ENCODE measurements at regions of chr19 and their contacts with region 1.

Region 1: DNA sequence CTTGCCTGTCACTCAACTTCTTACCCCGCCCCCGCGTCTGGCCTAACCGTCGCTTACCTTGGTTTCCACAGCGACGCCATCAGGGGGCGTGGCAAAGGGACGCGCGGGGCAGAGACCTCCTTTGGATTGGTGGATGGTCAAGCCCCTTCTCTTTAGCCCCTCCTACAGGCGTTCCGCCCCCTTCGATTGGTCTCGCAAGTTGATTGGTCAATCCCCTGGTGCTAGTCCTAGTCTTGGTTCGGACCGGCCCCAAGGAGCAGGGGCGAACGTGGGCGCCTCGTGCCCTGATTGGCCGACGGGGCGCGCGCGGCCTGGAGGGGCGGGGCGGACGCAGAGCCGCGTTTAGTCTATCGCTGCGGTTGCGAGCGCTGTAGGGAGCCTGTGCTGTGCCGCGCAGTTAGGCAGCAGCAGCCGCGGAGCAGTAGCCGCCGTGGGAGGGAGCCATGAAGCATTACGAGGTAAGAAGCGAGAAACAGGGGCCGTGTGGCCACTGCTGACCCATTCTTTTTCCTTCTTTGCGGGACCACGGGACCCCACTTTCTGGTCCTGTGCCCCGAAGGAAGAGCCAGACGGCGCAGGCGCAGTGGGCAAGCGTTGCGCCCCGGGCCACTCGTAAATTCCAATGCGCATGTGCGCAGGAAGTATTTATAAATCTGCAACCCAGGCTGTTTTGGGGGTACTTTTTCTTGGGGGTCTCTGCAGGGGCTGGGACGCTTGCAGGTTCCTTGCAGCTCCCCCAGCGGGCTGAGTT is at the start of gene TECR:
- DNase-seq: peak; percentile 100
- H3K4me3 Mint-ChIP-seq: peak within 1 kb of the TSS; percentile 93
- H3K27ac Mint-ChIP-seq: peak within 1 kb of the TSS; percentile 52
- H3K4me1 Mint-ChIP-seq: peaks cover 27% of the 10 kb centered on the region
- H3K27me3 Mint-ChIP-seq: no peaks in the 10 kb centered on the region
- CTCF ChIP-seq: no peak
- total RNA-seq, gene TECR: 74.1 and 106 TPM in 2 replicates

Region 2: DNA sequence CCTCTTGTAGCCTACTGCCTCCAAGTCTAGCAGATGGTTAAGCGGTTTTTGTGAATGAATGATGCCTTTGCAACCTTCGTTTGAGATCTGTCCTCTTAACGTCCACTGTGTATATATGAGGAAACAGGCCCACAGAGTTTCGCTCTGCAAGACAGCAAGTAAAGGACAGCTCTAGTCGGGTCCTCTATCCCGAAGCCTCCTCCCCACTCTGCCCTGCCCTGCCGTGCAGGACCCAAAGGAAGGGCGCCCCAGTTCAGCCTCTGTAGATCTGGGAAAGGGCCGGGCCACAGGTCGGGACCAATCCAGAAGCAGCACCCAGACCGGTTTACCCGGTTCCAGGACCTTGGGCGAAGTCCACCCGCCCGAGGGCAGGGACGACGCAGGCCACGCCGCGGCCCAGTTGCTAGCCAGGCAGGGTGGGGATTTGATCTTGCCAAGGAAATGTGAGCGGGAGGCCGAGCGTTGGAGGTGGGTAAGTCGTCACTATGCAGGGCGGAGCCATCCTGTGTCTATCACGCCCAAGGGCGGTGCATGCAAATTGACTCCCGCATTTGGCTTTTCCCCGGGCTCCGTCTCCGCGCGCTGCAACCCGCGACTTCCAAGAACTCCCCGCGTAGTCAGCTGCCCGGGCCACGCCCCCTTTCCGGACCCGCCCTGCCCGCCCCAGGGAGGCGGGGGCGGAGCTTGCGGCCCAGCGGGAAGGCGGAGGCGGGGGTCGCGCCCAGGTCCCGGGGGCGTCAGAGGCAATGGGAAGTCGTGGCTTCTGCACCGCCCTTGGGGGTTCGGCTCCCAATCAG is 1366.7 kb before region 1 on chr19:
- CTCF ChIA-PET with region 1: no interaction called
- POLR2A ChIA-PET with region 1: interaction called, 3 read pairs
- intact Hi-C with region 1: loop called (anchors 5 kb)
- DNase-seq: peak; percentile 99
- H3K4me3 Mint-ChIP-seq: peak overlapping the region; percentile 62
- H3K27ac Mint-ChIP-seq: peak overlapping the region; percentile 85
- H3K4me1 Mint-ChIP-seq: peaks cover 22% of the 10 kb centered on the region
- H3K27me3 Mint-ChIP-seq: no peaks in the 10 kb centered on the region
- CTCF ChIP-seq: no peak

Region 3: GRCh38 chr19:14425696-14426138 is 103.7 kb before region 1 on chr19:
- CTCF ChIA-PET with region 1: no interaction called
- POLR2A ChIA-PET with region 1: no interaction called
- intact Hi-C with region 1: no loop called
- DNase-seq: no peak
- H3K4me3 Mint-ChIP-seq: no peak overlapping the region
- H3K27ac Mint-ChIP-seq: no peak overlapping the region
- H3K4me1 Mint-ChIP-seq: peaks cover 5% of the 10 kb centered on the region
- H3K27me3 Mint-ChIP-seq: no peaks in the 10 kb centered on the region
- CTCF ChIP-seq: no peak

Region 4: GRCh38 chr19:14496028-14496833 is 33.2 kb before region 1 on chr19 and contains the start of gene GIPC1:
- CTCF ChIA-PET with region 1: no interaction called
- POLR2A ChIA-PET with region 1: interaction called, 52 read pairs
- intact Hi-C with region 1: no loop called
- DNase-seq: peak; percentile 99
- H3K4me3 Mint-ChIP-seq: peak within 1 kb of the TSS; percentile 76
- H3K27ac Mint-ChIP-seq: peak within 1 kb of the TSS; percentile 83
- H3K4me1 Mint-ChIP-seq: peaks cover 38% of the 10 kb centered on the region
- H3K27me3 Mint-ChIP-seq: no peaks in the 10 kb centered on the region
- CTCF ChIP-seq: no peak
- total RNA-seq, gene GIPC1: 107 and 108 TPM in 2 replicates

Region 5: DNA sequence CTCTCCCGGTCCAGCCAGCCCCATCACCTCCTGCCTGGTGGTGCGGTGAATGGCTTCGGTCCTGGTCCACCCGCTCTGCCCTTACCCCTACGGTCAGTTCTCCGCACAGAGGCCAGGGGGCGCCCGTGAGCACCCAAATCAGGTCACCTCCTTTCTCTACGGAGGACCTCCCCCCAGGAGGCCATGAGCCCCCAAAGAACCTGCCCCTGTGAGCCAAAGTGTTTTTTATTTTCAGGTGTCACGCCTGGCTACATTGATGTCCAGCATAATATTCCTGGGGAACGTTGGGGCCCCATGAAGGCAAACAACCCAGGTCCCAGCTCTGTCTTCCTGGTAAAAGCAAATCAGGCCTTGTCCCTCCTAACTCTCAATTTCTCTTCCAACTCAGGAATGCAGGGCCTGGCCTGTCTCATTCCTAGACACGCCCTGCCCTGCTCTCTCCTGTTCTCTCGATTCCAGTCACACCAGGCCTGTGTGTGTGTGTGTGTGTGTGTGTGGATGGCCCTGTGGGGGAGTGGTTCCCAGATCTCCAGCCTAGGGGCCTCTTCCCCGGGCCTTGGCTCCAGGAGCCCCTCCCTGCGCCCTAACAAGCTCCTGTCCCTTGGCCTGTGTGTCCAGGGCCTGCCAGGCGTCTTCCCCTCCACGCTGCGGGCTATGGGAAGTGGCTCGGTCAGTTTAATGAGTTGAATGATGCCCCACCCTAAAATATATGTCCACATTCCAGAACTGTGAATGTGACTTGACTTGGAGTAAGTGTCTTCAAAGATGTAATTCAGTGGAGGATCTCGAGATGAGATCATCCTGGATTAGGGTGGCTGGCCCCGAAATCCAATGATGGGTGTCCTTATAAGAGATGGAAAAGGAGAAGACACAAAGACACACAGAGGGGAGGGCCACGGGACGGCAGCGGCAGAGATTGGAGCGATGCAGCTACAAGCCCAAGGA is 23.7 kb before region 1 on chr19:
- CTCF ChIA-PET with region 1: interaction called, 9 read pairs
- POLR2A ChIA-PET with region 1: interaction called, 97 read pairs
- intact Hi-C with region 1: no loop called
- DNase-seq: peak; percentile 89
- H3K4me3 Mint-ChIP-seq: peak overlapping the region; percentile 65
- H3K27ac Mint-ChIP-seq: peak overlapping the region; percentile 96
- H3K4me1 Mint-ChIP-seq: peaks cover 33% of the 10 kb centered on the region
- H3K27me3 Mint-ChIP-seq: no peaks in the 10 kb centered on the region
- CTCF ChIP-seq: peak; percentile 85

Region 6: DNA sequence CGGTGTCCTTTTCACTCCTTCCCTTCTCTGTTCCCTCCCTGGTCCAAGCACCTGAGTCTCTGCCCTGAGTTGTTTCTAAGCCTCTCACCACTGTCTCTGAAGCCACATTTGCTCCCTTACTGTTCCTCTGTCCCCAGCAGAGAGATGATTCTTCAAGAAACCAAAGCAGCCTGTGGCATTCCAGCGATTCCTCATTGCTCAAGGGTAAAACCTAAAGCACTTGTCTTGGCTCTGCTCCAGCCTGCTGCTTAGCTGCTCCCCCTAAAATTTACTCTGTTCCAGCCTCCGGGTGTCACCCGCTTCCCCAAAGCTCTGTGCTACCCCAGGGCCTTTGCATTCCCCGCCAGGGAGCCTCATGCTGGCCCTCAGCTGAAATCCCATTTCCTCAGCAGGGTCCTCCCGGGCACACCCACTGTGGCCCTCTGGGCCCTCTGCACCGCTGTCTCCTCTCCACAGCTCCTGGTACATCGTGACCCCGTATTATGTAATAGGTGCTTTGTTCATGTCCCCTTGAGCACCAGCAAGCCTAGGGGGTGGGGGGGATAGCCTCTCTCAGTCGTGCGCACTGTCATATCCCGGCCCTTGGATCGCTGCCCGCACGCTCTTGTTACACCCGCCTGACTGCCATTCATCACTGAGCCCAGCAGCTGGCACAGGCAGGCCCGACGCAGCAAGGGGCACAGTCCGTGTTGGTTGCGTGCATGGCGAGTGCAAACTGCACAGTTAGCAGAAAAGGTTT is 15.7 kb after region 1 on chr19:
- CTCF ChIA-PET with region 1: interaction called, 8 read pairs
- POLR2A ChIA-PET with region 1: interaction called, 17 read pairs
- intact Hi-C with region 1: no loop called
- DNase-seq: peak; percentile 93
- H3K4me3 Mint-ChIP-seq: peak overlapping the region; percentile 59
- H3K27ac Mint-ChIP-seq: peak overlapping the region; percentile 7
- H3K4me1 Mint-ChIP-seq: peaks cover 17% of the 10 kb centered on the region
- H3K27me3 Mint-ChIP-seq: no peaks in the 10 kb centered on the region
- CTCF ChIP-seq: no peak

Region 7: DNA sequence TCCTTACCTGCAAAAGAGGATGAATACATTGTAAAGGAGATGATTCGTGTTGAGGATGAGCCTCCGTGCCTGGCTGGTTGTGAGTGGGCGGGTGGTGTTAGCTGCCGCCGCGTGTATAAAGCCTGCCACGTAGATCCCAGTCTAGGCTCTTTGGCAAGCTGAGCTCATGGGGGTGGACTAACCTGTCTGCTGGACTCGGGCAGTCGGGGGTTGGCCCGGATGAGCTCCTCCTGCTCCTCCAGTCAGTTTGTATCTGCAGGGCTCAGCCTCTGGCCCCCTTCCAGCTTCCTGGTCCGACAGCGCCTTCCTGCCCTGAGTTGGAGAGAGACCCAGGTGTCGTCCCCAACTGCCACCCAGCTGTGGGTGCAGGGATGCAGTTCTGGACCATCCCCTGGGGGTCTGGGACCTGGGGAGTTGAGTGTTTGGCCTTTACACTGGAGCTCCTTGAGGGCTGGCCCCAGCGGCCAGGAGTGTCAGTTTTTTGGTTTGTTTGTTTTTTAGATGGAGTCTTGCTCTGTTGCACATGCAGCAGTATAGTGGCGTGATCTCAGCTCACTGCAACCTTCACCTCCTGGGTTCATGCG is 20.9 kb after region 1 on chr19:
- CTCF ChIA-PET with region 1: interaction called, 8 read pairs
- POLR2A ChIA-PET with region 1: interaction called, 29 read pairs
- intact Hi-C with region 1: no loop called
- DNase-seq: peak; percentile 74
- H3K4me3 Mint-ChIP-seq: no peak overlapping the region
- H3K27ac Mint-ChIP-seq: peak overlapping the region; percentile 80
- H3K4me1 Mint-ChIP-seq: peaks cover 35% of the 10 kb centered on the region
- H3K27me3 Mint-ChIP-seq: no peaks in the 10 kb centered on the region
- CTCF ChIP-seq: no peak

Region 8: DNA sequence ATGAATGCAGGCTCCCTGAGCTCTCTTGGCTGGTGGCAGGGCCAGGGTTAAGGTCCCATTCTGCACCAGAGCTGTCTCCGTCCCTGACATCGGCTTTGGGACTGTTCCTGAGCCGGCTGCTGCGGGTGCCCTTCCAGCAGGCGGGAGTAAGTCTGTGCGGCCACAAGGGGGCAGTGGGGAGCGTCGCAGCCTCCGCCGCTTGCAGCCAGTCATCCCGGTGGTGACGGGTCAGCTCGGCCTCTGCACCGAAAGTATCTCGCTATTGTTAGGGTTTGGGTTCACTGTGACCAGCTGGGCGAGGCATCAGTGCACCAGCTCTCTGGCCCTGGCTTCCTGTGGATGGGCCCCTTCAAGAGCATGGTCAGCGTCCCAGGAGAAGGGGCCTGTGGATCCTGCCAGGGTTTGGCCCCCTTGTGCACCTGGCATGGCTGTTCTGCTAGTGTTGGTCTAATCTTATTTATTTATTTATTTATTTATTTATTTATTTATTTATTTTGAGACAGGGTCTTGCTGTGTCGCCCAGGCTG is 27.3 kb after region 1 on chr19:
- CTCF ChIA-PET with region 1: interaction called, 8 read pairs
- POLR2A ChIA-PET with region 1: interaction called, 29 read pairs
- intact Hi-C with region 1: no loop called
- DNase-seq: peak; percentile 81
- H3K4me3 Mint-ChIP-seq: peak overlapping the region; percentile 45
- H3K27ac Mint-ChIP-seq: peak overlapping the region; percentile 88
- H3K4me1 Mint-ChIP-seq: peaks cover 34% of the 10 kb centered on the region
- H3K27me3 Mint-ChIP-seq: no peaks in the 10 kb centered on the region
- CTCF ChIP-seq: peak; percentile 93

Region 9: DNA sequence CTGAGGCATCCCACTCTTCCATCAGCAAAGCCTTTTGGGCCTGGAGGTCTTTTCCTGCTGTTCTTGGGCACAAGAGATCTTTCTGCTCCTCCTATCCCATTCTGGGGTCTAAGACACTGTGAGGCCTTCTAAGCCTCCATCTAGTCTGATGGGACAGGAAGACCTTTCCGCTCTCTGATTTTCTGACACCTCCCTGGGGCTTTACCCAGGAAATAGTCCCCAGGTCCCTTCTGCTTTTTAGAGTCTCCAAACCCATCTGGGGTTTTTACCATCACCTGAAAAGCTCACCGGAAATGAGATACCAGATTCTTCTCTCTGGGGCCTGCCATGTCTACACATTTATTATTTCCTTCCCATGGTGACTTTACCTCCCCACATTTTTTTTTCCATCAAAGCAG is 74.6 kb after region 1 on chr19:
- CTCF ChIA-PET with region 1: no interaction called
- POLR2A ChIA-PET with region 1: no interaction called
- intact Hi-C with region 1: no loop called
- DNase-seq: no peak
- H3K4me3 Mint-ChIP-seq: no peak overlapping the region
- H3K27ac Mint-ChIP-seq: no peak overlapping the region
- H3K4me1 Mint-ChIP-seq: no peaks in the 10 kb centered on the region
- H3K27me3 Mint-ChIP-seq: no peaks in the 10 kb centered on the region
- CTCF ChIP-seq: no peak

Measured in MCF 10A (cell line).